ENCODE measurements at regions of chr3 and their contacts with region 1.

Region 1: DNA sequence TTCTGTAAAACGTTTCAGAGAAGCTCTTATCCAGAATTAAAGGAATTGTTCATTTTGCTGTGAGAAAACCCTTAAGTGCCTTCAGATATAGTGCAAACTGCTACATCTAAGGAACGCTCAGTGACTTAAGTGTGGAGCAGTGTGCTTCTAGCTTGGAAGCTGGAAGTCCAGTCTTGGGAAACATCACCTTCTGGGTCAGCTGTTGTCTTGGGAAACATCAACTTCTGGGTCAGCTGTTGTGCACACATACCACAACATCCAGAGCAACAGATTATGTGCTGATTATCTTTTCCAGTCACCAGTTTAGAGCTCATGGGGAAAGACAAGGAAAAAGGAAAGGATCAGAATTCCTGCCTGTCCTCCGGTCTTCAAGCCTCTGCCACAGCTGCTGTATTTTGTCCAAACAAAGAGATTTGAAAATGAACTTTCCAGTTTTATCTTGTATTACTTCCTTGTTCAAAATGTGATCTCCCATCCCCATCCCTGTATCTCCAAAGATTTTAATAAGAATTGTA is 713.6 kb downstream of the NSUN3 start:
- DNase-seq: no peak
- H3K4me3 ChIP-seq: no peak overlapping the region
- H3K4me3 Mint-ChIP-seq: no peak overlapping the region
- H3K27ac Mint-ChIP-seq: no peak overlapping the region
- H3K4me1 ChIP-seq: no peaks in the 10 kb centered on the region
- H3K4me1 Mint-ChIP-seq: no peaks in the 10 kb centered on the region
- H3K27me3 ChIP-seq: no peaks in the 10 kb centered on the region
- H3K27me3 Mint-ChIP-seq: no peaks in the 10 kb centered on the region
- CTCF ChIP-seq: no peak

Region 2: DNA sequence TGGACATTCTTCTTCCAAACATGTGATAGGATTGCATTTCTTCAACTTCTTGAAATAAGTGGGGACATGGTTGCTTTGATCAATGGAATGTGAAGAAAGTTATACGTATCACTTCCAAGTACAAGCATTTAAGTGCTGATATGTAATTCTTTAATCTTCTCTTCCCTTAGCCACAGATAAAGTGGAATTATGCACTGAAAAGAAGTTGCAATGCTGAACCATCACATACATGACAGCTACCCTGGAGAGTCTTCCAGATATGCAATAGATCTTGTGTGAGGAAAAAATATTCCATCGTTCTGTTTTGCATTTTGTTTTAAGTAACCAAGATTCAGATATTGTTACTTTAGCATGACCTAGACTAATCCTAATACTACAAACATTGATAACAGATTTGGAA is 39.3 kb before region 1 on chr3:
- CTCF ChIA-PET with region 1: no interaction called
- POLR2A ChIA-PET with region 1: no interaction called
- intact Hi-C with region 1: no loop called
- DNase-seq: no peak
- H3K4me3 ChIP-seq: no peak overlapping the region
- H3K4me3 Mint-ChIP-seq: no peak overlapping the region
- H3K27ac Mint-ChIP-seq: no peak overlapping the region
- H3K4me1 ChIP-seq: no peaks in the 10 kb centered on the region
- H3K4me1 Mint-ChIP-seq: no peaks in the 10 kb centered on the region
- H3K27me3 ChIP-seq: no peaks in the 10 kb centered on the region
- H3K27me3 Mint-ChIP-seq: no peaks in the 10 kb centered on the region
- CTCF ChIP-seq: no peak

Region 3: GRCh38 chr3:94822298-94822697 is 45.8 kb after region 1 on chr3:
- CTCF ChIA-PET with region 1: no interaction called
- POLR2A ChIA-PET with region 1: no interaction called
- intact Hi-C with region 1: loop called (anchors 5 kb)
- DNase-seq: no peak
- H3K4me3 ChIP-seq: no peak overlapping the region
- H3K4me3 Mint-ChIP-seq: no peak overlapping the region
- H3K27ac Mint-ChIP-seq: no peak overlapping the region
- H3K4me1 ChIP-seq: no peaks in the 10 kb centered on the region
- H3K4me1 Mint-ChIP-seq: no peaks in the 10 kb centered on the region
- H3K27me3 ChIP-seq: no peaks in the 10 kb centered on the region
- H3K27me3 Mint-ChIP-seq: no peaks in the 10 kb centered on the region
- CTCF ChIP-seq: no peak